ENCODE measurements at regions of chr16 and their contacts with region 1.

Region 1: GRCh38 chr16:57899771-57900661 is 70.9 kb downstream of the CNGB1 start:
- DNase-seq: peak; percentile 86
- H3K4me3 ChIP-seq: no peak overlapping the region
- H3K27ac ChIP-seq: no peak overlapping the region
- H3K4me1 ChIP-seq: no peaks in the 10 kb centered on the region; a peak in 1 of 4 replicates
- H3K27me3 ChIP-seq: no peaks in the 10 kb centered on the region
- CTCF ChIP-seq: peak; percentile 95
- EP300 ChIP-seq: no peak
- RAD21 ChIP-seq: peak; percentile 94

Region 2: DNA sequence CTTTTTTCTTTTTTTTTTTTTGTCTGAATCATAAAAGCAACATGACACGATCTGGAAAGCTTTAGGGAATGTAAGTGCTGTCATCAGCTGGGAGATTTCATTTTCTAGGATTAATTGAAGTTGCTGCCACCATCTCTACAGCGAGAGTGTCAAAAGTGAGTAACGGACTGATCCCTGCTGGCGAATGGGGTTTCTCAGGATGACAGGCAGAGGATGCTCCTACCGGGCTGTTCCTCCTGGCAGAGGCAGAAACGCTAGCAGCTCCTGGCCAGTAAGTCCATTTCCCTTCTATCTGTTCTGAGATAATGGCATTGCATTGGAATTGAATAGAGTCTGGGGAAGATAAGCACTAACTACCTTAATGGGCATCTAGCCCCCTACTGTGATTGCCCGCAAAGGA is 17.2 kb before region 1 on chr16:
- CTCF ChIA-PET with region 1: interaction called, 51 read pairs
- POLR2A ChIA-PET with region 1: no interaction called
- DNase-seq: peak; percentile 90
- H3K4me3 ChIP-seq: no peak overlapping the region
- H3K27ac ChIP-seq: no peak overlapping the region
- H3K4me1 ChIP-seq: peaks cover 0 to 12% of the 10 kb centered on the region in 2 experiments; a peak in 2 of 4 replicates
- H3K27me3 ChIP-seq: peaks cover 5% of the 10 kb centered on the region; the same call in 1 of the 2 replicates
- CTCF ChIP-seq: no peak
- EP300 ChIP-seq: peak in 1 of 2 experiments; percentile 64; a peak in 2 of 4 replicates
- RAD21 ChIP-seq: peak; percentile 23; the same call in 1 of the 2 replicates

Region 3: DNA sequence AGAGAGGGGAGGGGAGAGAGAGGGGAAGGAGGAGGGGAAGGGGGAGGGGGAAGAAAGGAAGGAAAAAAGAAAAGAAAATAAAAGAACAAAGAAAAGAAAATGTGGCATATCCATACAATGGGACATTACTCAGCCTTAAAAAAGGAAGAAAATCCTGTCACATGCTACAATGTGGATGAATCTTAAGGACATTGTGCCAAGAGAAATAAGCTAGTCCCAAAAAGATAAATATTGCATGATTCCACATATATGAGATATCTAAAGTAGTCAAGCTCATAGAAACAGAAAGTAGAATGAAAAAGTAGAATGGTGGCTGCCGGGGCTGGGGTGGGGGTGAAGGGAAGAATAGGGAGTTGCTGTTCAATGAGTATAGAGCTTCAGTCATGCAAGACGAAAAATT is 30.5 kb after region 1 on chr16:
- CTCF ChIA-PET with region 1: interaction called, 14 read pairs
- POLR2A ChIA-PET with region 1: no interaction called
- DNase-seq: no peak
- H3K4me3 ChIP-seq: no peak overlapping the region
- H3K27ac ChIP-seq: no peak overlapping the region
- H3K4me1 ChIP-seq: no peaks in the 10 kb centered on the region
- H3K27me3 ChIP-seq: no peaks in the 10 kb centered on the region
- CTCF ChIP-seq: no peak
- EP300 ChIP-seq: no peak
- RAD21 ChIP-seq: no peak

Region 4: DNA sequence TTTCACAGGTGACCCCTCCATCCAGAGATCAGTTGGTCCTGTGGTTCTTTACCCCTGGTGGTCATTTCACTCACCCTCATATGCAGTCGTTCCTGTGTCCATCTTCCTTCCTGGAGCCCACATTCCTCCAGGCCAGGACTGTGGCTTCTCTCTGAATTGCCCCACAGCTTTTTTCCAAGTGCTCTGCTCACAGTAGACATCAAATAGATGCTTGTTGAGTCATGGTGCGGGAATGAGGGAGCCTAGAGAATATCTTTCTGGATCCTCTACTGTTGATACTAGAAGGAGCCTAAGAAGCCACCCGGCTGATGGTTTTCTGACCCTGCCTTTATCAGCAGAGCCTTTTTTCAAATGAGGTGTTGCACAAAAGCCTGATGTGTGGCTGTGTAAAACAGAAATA is 111.6 kb after region 1 on chr16:
- CTCF ChIA-PET with region 1: interaction called, 12 read pairs
- POLR2A ChIA-PET with region 1: no interaction called
- DNase-seq: no peak
- H3K4me3 ChIP-seq: no peak overlapping the region
- H3K27ac ChIP-seq: no peak overlapping the region; a peak in 1 of 4 replicates
- H3K4me1 ChIP-seq: peaks cover 0 to 11% of the 10 kb centered on the region in 2 experiments; a peak in 2 of 4 replicates
- H3K27me3 ChIP-seq: no peaks in the 10 kb centered on the region
- CTCF ChIP-seq: no peak
- EP300 ChIP-seq: no peak
- RAD21 ChIP-seq: no peak